CD8-positive, alpha-beta T cell (primary cell): ENCODE measurements at regions of chr5 and their contacts with region 1.

Region 1: GRCh38 chr5:94968507-94969095 is 316.3 kb downstream of the MCTP1 start:
- DNase-seq: peak in 2 of 9 experiments; percentile 35 to 54
- ATAC-seq: peak; percentile 40
- H3K4me3 ChIP-seq: no peak overlapping the region
- H3K4me3 Mint-ChIP-seq: no peak overlapping the region
- H3K27ac ChIP-seq: no peak overlapping the region
- H3K27ac Mint-ChIP-seq: no peak overlapping the region
- H3K4me1 ChIP-seq: no peaks in the 10 kb centered on the region
- H3K4me1 Mint-ChIP-seq: no peaks in the 10 kb centered on the region
- H3K27me3 ChIP-seq: no peaks in the 10 kb centered on the region
- H3K27me3 Mint-ChIP-seq: no peaks in the 10 kb centered on the region
- CTCF ChIP-seq: peak; percentile 80

Region 2: DNA sequence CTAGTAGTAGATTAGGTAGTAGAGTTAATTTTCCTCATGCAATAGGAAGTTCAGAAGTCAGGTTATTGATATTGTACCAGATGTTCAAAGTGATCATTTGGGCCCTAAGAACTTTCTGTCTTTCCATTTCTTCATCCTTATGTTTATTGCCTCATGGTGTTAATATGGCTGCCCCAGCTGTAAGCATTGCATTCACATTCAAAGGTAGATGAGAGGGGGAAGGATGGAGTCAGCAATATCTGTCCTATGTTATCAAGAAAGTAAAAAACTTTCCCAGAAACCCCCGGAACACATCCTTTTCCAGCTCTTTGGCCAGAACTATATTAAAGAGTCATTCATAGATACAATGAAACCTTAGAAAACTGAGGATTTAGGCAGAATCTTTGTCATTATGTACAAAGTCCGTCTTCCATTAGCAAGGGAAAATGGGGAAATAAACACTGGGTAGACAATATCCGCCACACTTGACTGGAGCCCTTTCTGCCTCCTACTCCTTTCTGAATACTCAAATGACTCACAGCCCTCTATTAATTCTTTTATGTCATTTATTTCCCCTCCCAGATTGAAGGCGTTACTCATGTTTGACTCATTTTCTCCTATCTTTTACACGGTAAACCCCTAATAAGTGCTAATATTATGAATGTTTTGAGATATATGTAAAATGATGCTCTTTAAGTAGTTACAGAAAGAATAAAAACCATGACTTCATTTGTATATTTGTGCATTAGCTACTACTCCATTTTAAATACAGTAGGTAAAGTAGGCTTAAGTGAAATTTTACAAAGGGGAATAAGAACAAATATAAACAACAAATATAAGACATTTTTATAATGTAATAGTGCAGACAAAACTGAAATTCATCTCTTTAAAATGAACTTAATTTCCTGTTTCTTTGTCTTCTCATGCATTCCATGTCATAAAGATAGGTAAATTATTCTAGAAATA is 222.5 kb before region 1 on chr5:
- CTCF ChIA-PET with region 1: no interaction called
- POLR2A ChIA-PET with region 1: no interaction called
- intact Hi-C with region 1: no loop called
- DNase-seq: no peak
- ATAC-seq: no peak
- H3K4me3 ChIP-seq: no peak overlapping the region
- H3K4me3 Mint-ChIP-seq: no peak overlapping the region
- H3K27ac ChIP-seq: no peak overlapping the region
- H3K27ac Mint-ChIP-seq: no peak overlapping the region
- H3K4me1 ChIP-seq: no peaks in the 10 kb centered on the region
- H3K4me1 Mint-ChIP-seq: no peaks in the 10 kb centered on the region
- H3K27me3 ChIP-seq: no peaks in the 10 kb centered on the region
- H3K27me3 Mint-ChIP-seq: peaks cover 3% of the 10 kb centered on the region
- CTCF ChIP-seq: no peak

Region 3: DNA sequence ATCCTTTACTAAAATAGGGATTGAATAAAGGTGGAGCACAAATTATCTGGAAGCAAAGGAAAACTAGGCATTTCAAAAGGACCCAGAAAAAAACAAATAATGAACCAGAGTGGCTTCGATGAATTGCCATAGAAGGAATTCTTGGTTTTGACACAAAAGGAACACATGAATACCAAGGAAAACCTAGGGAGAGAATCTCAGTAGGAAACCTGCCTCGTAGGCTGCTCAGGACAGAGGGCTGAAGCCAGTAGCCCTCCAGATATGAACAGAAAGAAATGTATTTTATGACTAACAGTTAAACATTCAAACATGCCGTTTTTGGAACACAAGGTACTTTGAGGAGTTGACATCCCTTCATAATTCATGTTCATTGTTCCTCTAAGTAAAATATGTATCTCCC is 104.7 kb before region 1 on chr5:
- CTCF ChIA-PET with region 1: no interaction called
- POLR2A ChIA-PET with region 1: no interaction called
- intact Hi-C with region 1: no loop called
- DNase-seq: no peak
- ATAC-seq: no peak
- H3K4me3 ChIP-seq: no peak overlapping the region
- H3K4me3 Mint-ChIP-seq: no peak overlapping the region
- H3K27ac ChIP-seq: no peak overlapping the region
- H3K27ac Mint-ChIP-seq: no peak overlapping the region
- H3K4me1 ChIP-seq: no peaks in the 10 kb centered on the region
- H3K4me1 Mint-ChIP-seq: no peaks in the 10 kb centered on the region
- H3K27me3 ChIP-seq: no peaks in the 10 kb centered on the region
- H3K27me3 Mint-ChIP-seq: no peaks in the 10 kb centered on the region
- CTCF ChIP-seq: no peak

Region 4: DNA sequence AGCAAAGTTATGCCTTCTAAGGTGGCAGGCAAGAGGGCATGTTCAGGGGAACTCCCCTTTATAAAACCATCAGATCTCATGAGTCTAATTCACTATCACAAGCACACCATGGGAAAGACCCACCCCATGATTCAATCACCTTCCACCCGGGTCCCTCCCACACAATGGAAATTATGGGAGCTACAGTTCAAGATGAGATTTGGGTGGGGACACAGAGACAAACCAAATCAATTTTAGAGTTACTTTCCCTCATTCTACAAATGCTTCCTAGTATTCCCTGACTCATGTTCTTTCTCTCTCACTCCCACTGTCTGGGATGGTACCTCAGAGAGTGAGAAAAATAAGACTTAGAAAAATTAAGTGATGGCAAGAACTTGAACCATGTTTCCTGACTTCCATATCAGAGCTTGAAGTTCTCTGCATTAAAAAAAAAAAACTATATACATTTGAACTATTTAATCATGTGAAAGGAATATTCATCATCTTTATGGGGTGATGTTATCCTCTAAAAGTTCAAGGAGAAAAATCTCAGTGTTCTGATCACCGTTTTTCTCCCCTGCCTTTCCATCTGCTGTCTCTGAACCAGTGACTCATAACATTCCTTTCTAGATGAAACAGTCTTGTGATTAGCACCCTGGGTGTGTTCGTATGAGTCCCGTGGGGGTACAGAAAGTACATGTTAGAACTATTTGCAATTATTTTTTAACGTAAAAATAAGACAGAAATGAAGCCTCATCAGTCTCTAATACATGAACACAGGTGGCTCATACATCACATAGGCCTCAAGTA is 67.2 kb before region 1 on chr5:
- CTCF ChIA-PET with region 1: no interaction called
- POLR2A ChIA-PET with region 1: no interaction called
- intact Hi-C with region 1: no loop called
- DNase-seq: no peak
- ATAC-seq: no peak
- H3K4me3 ChIP-seq: no peak overlapping the region
- H3K4me3 Mint-ChIP-seq: no peak overlapping the region
- H3K27ac ChIP-seq: no peak overlapping the region
- H3K27ac Mint-ChIP-seq: no peak overlapping the region
- H3K4me1 ChIP-seq: no peaks in the 10 kb centered on the region
- H3K4me1 Mint-ChIP-seq: no peaks in the 10 kb centered on the region
- H3K27me3 ChIP-seq: no peaks in the 10 kb centered on the region
- H3K27me3 Mint-ChIP-seq: no peaks in the 10 kb centered on the region
- CTCF ChIP-seq: no peak

Region 5: DNA sequence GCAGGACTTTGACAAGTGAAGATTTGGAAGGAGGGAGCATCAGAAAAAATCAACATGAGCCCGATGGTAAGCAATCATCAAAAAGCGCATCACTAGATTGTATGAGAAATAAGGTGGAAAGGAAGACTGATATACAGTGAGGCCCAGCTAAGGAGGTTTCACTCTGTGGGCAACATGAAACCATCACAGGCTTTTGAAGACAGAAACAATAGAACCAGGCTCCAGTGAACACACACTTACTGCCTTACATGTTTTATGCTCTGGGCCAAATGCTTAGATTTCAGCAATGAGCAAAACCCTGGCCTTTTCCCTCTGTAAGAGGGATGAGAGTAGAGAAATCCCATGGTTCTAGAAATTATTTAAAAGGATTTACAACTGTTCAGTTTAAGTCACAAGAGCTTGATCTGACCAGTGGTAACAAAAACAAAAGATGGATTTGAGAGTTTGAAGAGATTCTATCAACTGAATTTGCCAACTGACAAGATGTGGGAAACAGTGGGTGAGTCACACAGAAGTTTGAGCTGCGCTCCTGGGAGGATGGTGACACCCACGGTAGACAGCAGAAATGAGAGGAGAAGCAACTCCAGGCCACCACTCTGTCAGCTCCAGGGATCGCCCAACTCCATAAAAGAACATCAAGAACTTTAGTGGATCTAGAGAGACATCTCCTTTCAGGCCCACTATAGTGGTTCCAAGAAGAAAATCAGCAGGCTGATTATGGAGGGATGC is 54.5 kb after region 1 on chr5:
- CTCF ChIA-PET with region 1: no interaction called
- POLR2A ChIA-PET with region 1: no interaction called
- intact Hi-C with region 1: no loop called
- DNase-seq: peak in 1 of 9 experiments; percentile 9
- ATAC-seq: no peak
- H3K4me3 ChIP-seq: no peak overlapping the region
- H3K4me3 Mint-ChIP-seq: no peak overlapping the region
- H3K27ac ChIP-seq: no peak overlapping the region
- H3K27ac Mint-ChIP-seq: no peak overlapping the region
- H3K4me1 ChIP-seq: no peaks in the 10 kb centered on the region
- H3K4me1 Mint-ChIP-seq: peaks cover 6% of the 10 kb centered on the region
- H3K27me3 ChIP-seq: no peaks in the 10 kb centered on the region
- H3K27me3 Mint-ChIP-seq: no peaks in the 10 kb centered on the region
- CTCF ChIP-seq: no peak

Region 6: GRCh38 chr5:95238560-95239325 is 270.1 kb after region 1 on chr5:
- CTCF ChIA-PET with region 1: no interaction called
- POLR2A ChIA-PET with region 1: no interaction called
- intact Hi-C with region 1: loop called in 1 of 2 experiments (anchors 1 kb)
- DNase-seq: no peak
- ATAC-seq: no peak
- H3K4me3 ChIP-seq: no peak overlapping the region
- H3K4me3 Mint-ChIP-seq: no peak overlapping the region
- H3K27ac ChIP-seq: no peak overlapping the region
- H3K27ac Mint-ChIP-seq: no peak overlapping the region
- H3K4me1 ChIP-seq: no peaks in the 10 kb centered on the region
- H3K4me1 Mint-ChIP-seq: no peaks in the 10 kb centered on the region
- H3K27me3 ChIP-seq: no peaks in the 10 kb centered on the region
- H3K27me3 Mint-ChIP-seq: no peaks in the 10 kb centered on the region
- CTCF ChIP-seq: no peak

Region 7: GRCh38 chr5:95261437-95262175 is 293.0 kb after region 1 on chr5:
- CTCF ChIA-PET with region 1: interaction called, 3 read pairs
- POLR2A ChIA-PET with region 1: no interaction called
- intact Hi-C with region 1: loop called (anchors 2 to 5 kb)
- DNase-seq: peak in 1 of 9 experiments; percentile 20
- ATAC-seq: no peak
- H3K4me3 ChIP-seq: no peak overlapping the region
- H3K4me3 Mint-ChIP-seq: no peak overlapping the region
- H3K27ac ChIP-seq: no peak overlapping the region
- H3K27ac Mint-ChIP-seq: no peak overlapping the region
- H3K4me1 ChIP-seq: no peaks in the 10 kb centered on the region
- H3K4me1 Mint-ChIP-seq: no peaks in the 10 kb centered on the region
- H3K27me3 ChIP-seq: no peaks in the 10 kb centered on the region
- H3K27me3 Mint-ChIP-seq: peaks cover 5% of the 10 kb centered on the region
- CTCF ChIP-seq: no peak